Head of caudate nucleus (tissue), 42 donors: ENCODE measurements at regions of chr5 and their contacts with region 1.

Region 1: GRCh38 chr5:132883261-132883834 is 9.9 kb downstream of the LEAP2 start:
- DNase-seq: peak in 39 of 42 donors; percentile 27 to 87 (median 65)

Region 2: DNA sequence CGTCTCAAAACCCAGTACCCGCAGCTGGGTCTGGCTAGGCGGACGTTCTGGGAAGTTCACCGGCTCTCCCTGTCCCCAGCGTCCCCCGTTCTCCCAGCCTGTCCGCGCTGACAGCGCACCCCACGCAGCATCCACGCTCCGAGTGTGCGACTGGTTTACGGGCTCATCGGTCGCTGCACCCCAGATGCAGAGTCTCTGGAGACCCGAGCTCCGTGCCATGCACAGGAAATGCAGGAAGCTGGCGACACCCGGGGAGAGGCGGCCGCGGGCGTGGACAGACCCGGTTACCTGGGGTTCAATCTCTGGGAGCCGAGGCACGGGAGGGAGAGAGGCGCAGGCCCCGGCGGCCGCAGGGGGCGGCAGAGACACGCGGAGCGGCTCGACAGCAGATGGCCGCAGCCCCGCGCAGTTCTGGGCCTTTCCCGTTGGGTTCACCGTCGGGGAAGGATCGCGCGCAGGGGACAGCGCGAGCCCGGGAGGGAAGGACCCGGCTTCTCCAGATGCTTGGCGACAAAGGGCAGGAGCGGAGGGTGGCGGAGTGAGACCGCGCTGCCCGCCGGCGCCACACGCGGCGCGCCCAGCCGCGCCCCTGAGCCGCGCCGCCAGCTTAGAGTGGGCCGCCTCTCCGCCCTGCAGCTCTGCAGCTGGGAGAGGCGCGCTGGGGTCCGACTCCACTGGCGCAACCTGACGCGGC is 53.5 kb before region 1 on chr5:
- intact Hi-C with region 1: loop called (anchors 5 kb)
- DNase-seq: peak in 41 of 42 donors; percentile 69 to 91 (median 82)

Region 3: GRCh38 chr5:133025804-133026663 is 142.7 kb after region 1 on chr5 and contains the start of gene ZCCHC10:
- intact Hi-C with region 1: no loop called
- DNase-seq: peak; percentile 85 to 97 (median 94)